Stomach (tissue), 19 donors: ENCODE measurements at regions of chr1 and their contacts with region 1.

Region 1: DNA sequence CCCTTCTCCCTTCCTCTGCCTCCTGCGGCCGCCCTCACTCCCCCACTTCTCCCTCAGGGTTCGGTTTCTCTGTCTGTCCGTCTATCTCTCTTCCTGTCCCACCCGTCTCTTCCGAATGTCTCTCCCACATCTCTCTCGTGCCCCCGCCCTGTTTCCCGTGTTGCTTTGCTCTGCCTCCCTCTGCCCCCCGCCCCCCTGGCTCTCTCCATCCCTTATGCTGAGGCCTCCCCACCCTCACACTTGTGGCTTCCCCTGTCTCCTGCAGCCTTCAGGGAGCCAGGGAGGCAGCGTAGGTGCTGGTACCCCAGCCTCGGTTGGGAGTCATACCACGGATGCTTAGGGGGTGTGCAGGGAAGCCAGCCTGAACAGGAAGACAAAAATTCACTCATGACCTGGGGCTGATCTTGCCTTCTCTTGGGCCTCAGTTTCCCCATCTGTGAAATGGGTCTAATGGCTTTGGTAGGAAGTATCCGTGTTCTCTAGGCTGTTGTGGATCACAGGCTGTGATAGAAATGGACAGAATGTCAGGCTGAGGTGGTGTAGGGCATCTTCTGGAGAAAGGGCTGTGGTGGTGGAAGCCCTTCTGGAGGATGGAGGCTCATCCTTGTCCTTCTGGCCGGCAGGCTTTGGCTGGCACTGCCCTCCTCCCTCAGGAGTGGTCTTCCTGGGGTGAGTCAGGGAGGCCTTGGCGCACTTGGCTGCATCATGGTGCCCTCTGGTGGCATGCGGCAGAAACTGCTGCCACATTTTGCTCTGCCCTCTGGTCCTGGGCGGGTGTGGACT is 55.5 kb downstream of the FOXO6 start:
- DNase-seq: peak; percentile 63 to 90
- H3K4me3 ChIP-seq: no peak overlapping the region
- H3K27ac ChIP-seq: no peak overlapping the region
- H3K4me1 ChIP-seq: peaks cover 0 to 23% (median 11%) of the 10 kb centered on the region in 4 donors
- H3K27me3 ChIP-seq: peaks cover 0 to 13% (median 0%) of the 10 kb centered on the region in 3 donors
- CTCF ChIP-seq: peak in 5 of 7 experiments; percentile 83 to 95 (median 87)
- EP300 ChIP-seq: no peak
- POLR2A ChIP-seq: no peak

Region 2: DNA sequence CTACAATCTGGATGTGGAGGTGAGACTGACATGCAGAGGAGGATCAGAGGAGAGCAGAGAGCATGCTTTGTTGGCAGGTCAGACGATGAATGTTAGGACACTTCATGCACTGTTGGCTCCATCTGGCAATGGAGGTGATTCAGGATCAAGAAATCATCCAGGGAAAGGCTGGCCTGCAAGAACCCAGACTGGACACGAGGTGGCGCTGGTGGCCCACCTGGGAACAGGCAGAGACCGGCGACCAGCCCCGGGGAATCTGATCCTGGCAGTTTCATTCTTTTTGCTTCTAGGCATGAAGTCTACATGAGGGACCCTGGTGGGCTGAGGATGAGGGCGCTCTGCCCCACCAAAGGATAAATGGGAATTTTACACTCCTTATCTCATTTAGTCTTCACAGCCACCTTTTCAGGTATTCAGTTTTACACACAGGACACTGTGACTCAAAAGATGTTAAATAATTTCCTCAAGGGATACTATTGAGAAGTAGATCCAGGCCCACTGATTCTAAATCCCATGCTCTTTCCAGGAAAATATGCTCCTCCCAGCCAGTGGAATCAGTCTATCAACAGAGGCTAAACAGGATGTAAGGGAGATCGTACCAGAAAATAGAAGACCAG is 148.5 kb before region 1 on chr1:
- intact Hi-C with region 1: loop called (anchors 5 kb)
- DNase-seq: peak; percentile 79 to 92
- H3K4me3 ChIP-seq: no peak overlapping the region
- H3K27ac ChIP-seq: no peak overlapping the region
- H3K4me1 ChIP-seq: peaks cover 0 to 10% (median 3%) of the 10 kb centered on the region in 4 donors
- H3K27me3 ChIP-seq: no peaks in the 10 kb centered on the region
- CTCF ChIP-seq: peak in 5 of 7 experiments; percentile 94 to 98 (median 95)
- EP300 ChIP-seq: no peak
- POLR2A ChIP-seq: no peak

Region 3: DNA sequence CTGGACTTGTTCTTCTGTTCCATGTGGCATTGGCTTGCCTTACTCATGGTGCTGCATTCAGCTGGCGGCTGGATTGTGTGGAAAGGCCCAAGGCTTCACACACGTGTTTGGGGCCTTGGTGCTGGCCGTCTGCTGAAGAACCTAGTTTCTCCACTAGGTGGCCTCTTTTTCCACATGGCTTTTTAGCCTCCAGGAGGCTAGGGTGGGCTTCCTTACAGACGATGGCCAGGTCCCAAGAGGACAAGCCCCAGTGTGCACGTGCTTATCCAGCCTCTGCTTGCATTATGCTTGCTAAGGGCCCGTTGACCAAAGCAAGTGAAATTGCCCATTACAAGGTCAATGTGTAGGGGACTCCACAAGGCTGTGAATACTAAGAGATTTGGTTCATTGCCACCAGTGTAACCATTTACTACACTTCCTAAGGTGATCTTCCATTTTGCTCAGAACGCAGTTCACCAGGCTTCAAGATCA is 103.0 kb before region 1 on chr1:
- intact Hi-C with region 1: loop called (anchors 10 kb)
- DNase-seq: peak in 1 of 2 donors; percentile 29
- H3K4me3 ChIP-seq: no peak overlapping the region
- H3K27ac ChIP-seq: peak overlapping the region in 2 of 5 donors; percentile 4
- H3K4me1 ChIP-seq: peaks cover 0 to 19% (median 13%) of the 10 kb centered on the region in 4 donors
- H3K27me3 ChIP-seq: no peaks in the 10 kb centered on the region
- CTCF ChIP-seq: peak in 4 of 7 experiments; percentile 16 to 38 (median 23)
- EP300 ChIP-seq: no peak
- POLR2A ChIP-seq: no peak